Ascending aorta (tissue), 2 donors: ENCODE measurements at regions of chr1 and their contacts with region 1.

Region 1: GRCh38 chr1:185720633-185721272 is 13.4 kb upstream of the HMCN1 start:
- DNase-seq: no peak
- H3K4me3 ChIP-seq: no peak overlapping the region
- H3K27ac ChIP-seq: peak overlapping the region; percentile 48 to 57
- H3K4me1 ChIP-seq: peaks cover 0 to 14% of the 10 kb centered on the region in 2 donors
- H3K27me3 ChIP-seq: no peaks in the 10 kb centered on the region
- CTCF ChIP-seq: peak; percentile 44 to 62 (median 50)

Region 2: GRCh38 chr1:185420588-185421081 is 300.1 kb before region 1 on chr1:
- intact Hi-C with region 1: no loop called
- DNase-seq: no peak
- H3K4me3 ChIP-seq: no peak overlapping the region
- H3K27ac ChIP-seq: no peak overlapping the region
- H3K4me1 ChIP-seq: no peaks in the 10 kb centered on the region
- H3K27me3 ChIP-seq: no peaks in the 10 kb centered on the region
- CTCF ChIP-seq: no peak

Region 3: DNA sequence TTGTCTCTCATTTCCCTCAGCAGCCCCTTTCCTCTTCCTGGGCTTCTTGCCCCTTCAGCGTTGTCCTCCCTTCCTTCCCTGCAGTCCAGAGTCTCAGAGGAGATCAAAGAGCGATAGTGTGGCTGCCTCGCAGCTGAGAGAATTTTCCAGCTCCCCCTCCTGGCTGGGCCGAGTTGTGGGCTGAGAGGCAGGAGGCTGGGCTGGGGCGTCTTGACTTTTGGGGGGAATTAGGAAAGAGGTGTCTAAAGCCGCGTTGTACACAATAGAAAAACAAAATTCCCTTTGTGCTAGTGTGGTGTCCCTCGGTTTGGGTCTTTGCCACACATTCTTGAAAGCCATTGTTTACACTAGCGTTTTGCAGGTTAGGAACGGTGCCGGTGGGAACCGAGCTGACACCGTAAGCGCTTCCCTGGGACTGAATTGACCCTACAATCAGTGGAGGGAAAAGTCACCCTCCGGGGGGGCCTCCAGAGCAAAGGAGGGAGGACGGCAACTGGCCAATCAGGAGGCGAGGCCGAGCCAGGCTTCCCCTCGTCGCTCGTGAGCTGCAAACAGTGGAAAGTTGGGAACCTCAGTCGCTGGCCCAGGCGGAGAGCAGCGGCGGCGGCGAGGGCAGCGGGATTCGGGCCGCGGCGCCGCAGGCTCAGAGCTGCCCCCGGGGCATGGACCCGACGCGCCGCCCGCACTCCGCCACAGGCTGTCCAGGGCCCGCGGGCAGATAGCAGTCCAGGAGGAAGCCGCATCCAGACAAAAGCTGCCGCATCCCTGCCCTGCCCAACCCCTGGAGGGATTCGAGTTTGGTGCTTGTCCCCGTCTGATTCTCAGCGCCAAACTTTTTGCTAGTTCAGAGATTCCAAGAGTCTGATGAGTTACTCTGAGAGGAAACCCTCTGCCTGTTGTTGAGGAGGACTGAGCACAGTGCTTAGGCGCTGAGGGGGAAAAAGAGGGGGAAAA is 13.3 kb after region 1 on chr1 and contains the start of gene HMCN1:
- intact Hi-C with region 1: loop called (anchors 1 kb)
- DNase-seq: peak in 1 of 2 donors; percentile 91
- H3K4me3 ChIP-seq: peak within 1 kb of the TSS; percentile 53 to 84
- H3K27ac ChIP-seq: peak within 1 kb of the TSS; percentile 88 to 95
- H3K4me1 ChIP-seq: peaks cover 0 to 7% of the 10 kb centered on the region in 2 donors
- H3K27me3 ChIP-seq: no peaks in the 10 kb centered on the region
- CTCF ChIP-seq: peak in 2 of 3 experiments; percentile 14 to 52
- total RNA-seq, gene HMCN1: 61.7 TPM